ENCODE measurements at regions of chr1 and their contacts with region 1.

Region 1: DNA sequence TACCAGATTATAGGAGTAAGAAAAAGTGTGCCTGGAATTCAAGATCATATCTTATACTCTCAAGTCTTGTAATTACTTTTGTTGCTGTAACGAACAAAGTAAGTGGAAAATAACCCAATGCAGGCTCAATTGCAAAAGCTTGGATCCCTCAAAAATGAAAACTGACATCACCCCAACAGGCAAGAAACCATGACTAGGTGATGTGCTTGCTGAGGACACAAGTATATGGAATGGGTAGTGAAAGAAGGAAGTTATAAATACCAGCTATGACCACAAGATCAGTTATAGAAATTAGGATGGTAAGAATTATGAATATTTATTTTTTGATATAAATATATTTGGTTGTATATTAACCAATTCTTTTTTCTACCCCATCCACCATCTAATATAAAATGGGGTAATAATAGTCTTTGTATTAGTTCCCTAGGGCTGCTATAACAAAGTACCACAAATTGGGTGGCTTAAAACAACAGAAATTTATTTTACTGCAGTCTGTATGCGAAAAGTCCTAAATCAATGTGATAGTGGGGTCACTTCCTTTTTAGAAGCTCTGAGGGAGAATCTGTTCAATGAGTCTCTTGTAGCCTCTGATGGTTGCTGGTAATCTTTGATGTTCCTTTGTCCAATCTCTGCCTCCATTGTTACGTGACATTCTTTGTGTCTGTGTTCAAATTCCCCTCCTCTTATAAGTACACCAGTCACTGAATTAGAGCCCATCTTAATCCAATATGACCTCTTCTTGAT is 45.0 kb downstream of the DUSP10 start:
- DNase-seq: no peak
- H3K27ac ChIP-seq: no peak overlapping the region
- CTCF ChIP-seq: no peak

Region 2: GRCh38 chr1:221637641-221638041 is 59.2 kb before region 1 on chr1:
- CTCF ChIA-PET with region 1: no interaction called
- POLR2A ChIA-PET with region 1: no interaction called
- DNase-seq: no peak
- H3K27ac ChIP-seq: no peak overlapping the region
- CTCF ChIP-seq: no peak

Region 3: DNA sequence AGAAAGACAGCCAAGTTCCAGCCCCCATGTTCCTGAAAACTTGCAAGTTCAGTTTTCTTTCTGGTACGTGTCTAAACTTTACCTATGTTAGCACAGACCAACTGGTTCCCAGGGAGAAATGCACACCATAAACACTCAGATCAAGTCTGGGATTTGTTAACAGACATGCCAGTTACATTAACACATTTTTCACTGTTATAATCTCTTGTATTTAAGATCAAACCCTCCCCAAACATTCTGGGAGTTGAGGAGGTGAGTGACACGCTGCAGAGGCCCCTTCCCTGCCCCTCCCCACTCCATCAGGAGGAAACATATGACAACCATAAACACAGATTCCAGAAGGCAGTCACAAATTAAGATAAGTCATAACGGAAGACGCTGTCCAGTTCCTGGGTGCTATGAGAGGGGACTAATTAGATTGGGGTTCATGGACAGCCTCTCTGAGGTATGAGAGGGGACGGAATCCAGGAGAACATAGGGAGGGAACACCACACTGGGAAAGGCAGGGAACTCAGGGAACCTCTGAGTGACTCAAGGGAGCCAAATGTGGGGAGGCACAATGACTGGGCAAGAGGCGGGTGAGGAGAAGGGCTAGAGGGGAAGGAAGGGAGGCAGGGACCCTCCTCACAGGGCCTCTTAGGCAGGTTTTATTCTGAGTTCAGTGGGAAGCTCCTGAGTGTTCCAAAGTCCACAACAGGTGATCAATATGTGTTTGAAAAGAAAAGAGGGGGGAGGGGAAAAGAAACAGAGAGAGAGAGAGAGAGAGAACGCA is 20.0 kb after region 1 on chr1:
- CTCF ChIA-PET with region 1: no interaction called
- POLR2A ChIA-PET with region 1: no interaction called
- DNase-seq: no peak
- H3K27ac ChIP-seq: no peak overlapping the region
- CTCF ChIP-seq: no peak

Region 4: GRCh38 chr1:222706815-222707214 is 1009.9 kb after region 1 on chr1:
- CTCF ChIA-PET with region 1: interaction called, 12 read pairs
- POLR2A ChIA-PET with region 1: no interaction called
- DNase-seq: no peak
- H3K27ac ChIP-seq: no peak overlapping the region
- CTCF ChIP-seq: no peak